ENCODE measurements at regions of chr9 and their contacts with region 1.

Region 1: GRCh38 chr9:80378675-80379293 is 807.0 kb downstream of the TLE4 start:
- DNase-seq: no peak
- ATAC-seq: no peak
- H3K4me3 Mint-ChIP-seq: no peak overlapping the region
- H3K27ac Mint-ChIP-seq: no peak overlapping the region
- H3K4me1 Mint-ChIP-seq: peaks cover 15% of the 10 kb centered on the region
- H3K27me3 Mint-ChIP-seq: no peaks in the 10 kb centered on the region
- CTCF ChIP-seq: no peak

Region 2: DNA sequence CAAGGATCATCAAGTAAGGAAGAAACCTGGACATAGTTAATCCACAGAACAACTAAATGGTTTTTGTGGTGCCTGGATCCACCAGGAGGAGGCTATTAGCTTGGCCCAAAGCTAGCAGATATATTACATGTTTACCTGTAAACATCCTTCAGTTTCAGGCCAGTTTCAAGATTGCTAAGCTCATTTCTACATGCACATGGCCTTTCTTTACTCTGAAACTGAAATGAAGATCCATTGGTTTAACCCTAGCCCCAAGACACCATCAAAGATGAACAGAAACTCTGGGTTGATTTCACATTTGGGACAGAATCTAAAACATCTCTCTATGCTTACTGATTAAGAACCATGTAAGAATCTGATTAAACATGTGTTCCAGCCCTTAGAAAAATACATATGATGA is 698.8 kb after region 1 on chr9:
- CTCF ChIA-PET with region 1: no interaction called
- POLR2A ChIA-PET with region 1: no interaction called
- intact Hi-C with region 1: loop called (anchors 5 kb)
- DNase-seq: no peak
- ATAC-seq: no peak
- H3K4me3 Mint-ChIP-seq: no peak overlapping the region
- H3K27ac Mint-ChIP-seq: no peak overlapping the region
- H3K4me1 Mint-ChIP-seq: peaks cover 9% of the 10 kb centered on the region
- H3K27me3 Mint-ChIP-seq: no peaks in the 10 kb centered on the region
- CTCF ChIP-seq: no peak